Right ventricle myocardium inferior (tissue), 1 donor: ENCODE measurements at regions of chr9 and their contacts with region 1.

Region 1: DNA sequence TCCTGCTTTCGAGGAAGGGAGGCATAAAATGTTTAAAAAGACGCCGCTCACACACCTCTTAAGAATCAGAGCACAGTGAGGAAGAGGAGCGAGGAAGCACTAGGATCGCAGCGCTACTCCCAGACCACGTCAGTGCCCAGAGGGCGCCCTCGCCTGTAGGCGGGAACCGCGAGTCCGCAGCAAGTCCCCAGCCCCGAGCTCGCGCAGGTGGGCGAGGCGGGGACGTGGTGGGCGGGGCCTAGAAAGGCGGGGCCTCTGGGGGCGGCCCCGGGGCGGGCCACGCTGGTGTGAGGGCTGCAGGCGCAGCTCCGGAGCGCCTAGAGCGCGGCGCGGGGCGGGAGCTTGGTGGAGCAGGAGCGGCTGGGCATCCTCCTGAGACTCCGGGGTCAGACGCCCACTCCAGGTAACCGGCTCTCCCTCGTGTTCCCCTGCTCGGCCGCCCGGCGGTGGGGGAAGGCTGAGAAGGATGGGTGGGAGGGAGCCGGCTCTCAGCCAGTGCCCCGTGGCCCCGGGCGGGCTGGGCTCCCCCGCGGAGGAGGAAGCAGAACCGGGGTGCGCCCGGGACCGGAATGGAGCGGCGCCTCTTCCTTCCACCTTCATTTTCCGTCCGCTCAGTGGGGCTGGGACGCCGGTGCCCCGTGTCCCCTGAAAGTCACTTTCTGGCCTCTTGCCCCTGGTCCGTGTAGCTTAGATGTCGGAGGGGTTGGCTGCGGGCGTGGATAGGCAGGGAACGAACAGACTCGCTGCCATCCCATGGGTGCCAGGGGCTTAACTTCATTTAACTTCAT is at the start of gene GCNT1:
- DNase-seq: peak; percentile 93
- ATAC-seq: peak; percentile 94
- total RNA-seq, gene GCNT1: 3.2 TPM

Region 2: GRCh38 chr9:76651119-76651705 is 192.1 kb after region 1 on chr9:
- intact Hi-C with region 1: loop called (anchors 5 kb)
- DNase-seq: no peak
- ATAC-seq: no peak